A549 (cell line): ENCODE measurements at regions of chr19 and their contacts with region 1.

Region 1: GRCh38 chr19:48391107-48391986 is at the start of gene KDELR1:
- DNase-seq: peak; percentile 77 to 78
- ATAC-seq: peak; percentile 54 to 72
- H3K4me3 ChIP-seq: peak within 1 kb of the TSS; percentile 97
- H3K27ac ChIP-seq: peak within 1 kb of the TSS; percentile 95 to 97
- H3K4me1 ChIP-seq: peaks cover 54% of the 10 kb centered on the region
- CTCF ChIP-seq: peak; percentile 90
- EP300 ChIP-seq: no peak
- POLR2A ChIP-seq: peak; percentile 72
- RAD21 ChIP-seq: peak; percentile 31 to 47; a peak in 4 of 5 replicates
- polyA plus RNA-seq, gene KDELR1: 200 and 270 TPM in 2 replicates

Region 2: DNA sequence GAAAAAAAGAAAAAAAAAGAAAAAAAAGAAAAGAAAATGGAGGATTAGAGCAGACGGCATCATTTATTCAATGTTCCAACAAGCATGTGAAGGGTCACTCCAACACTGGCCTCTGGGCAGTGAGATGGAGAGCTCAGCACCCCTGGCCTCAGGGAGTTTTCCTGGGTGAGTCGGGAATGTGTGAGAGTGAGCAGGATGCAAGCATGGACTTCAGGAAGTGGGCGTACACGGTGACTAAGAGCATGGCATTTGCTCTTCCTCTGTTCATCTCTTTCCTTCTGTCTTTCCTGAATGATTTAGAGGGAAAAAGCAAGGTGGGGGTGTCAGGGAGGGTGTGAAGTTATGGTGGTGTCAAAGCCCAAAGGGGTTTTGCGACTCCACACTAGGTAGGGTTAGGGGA is 346.8 kb before region 1 on chr19:
- CTCF ChIA-PET with region 1: no interaction called
- POLR2A ChIA-PET with region 1: no interaction called
- DNase-seq: no peak
- ATAC-seq: no peak
- H3K4me3 ChIP-seq: no peak overlapping the region
- H3K27ac ChIP-seq: no peak overlapping the region
- H3K4me1 ChIP-seq: no peaks in the 10 kb centered on the region
- CTCF ChIP-seq: no peak
- EP300 ChIP-seq: no peak
- POLR2A ChIP-seq: no peak
- RAD21 ChIP-seq: no peak

Region 3: GRCh38 chr19:48321622-48322591 is 69.4 kb before region 1 on chr19:
- CTCF ChIA-PET with region 1: interaction called, 18 read pairs
- POLR2A ChIA-PET with region 1: interaction called, 10 read pairs
- DNase-seq: peak; percentile 94 to 99
- ATAC-seq: peak; percentile 67 to 74
- H3K4me3 ChIP-seq: peak overlapping the region; percentile 57
- H3K27ac ChIP-seq: peak overlapping the region; percentile 92 to 94
- H3K4me1 ChIP-seq: peaks cover 45% of the 10 kb centered on the region
- CTCF ChIP-seq: no peak
- EP300 ChIP-seq: no peak
- POLR2A ChIP-seq: peak; percentile 72
- RAD21 ChIP-seq: 0 out of 5 replicates have a peak, but pooled peaks of 1 of the 2 experiments have one; percentile 6

Region 4: GRCh38 chr19:48351341-48351752 is 40.0 kb before region 1 on chr19:
- CTCF ChIA-PET with region 1: interaction called, 33 read pairs
- POLR2A ChIA-PET with region 1: interaction called, 7 read pairs
- DNase-seq: peak; percentile 82 to 89
- ATAC-seq: peak; percentile 76 to 83
- H3K4me3 ChIP-seq: no peak overlapping the region
- H3K27ac ChIP-seq: peak overlapping the region in 1 of 2 experiments; percentile 74; a peak in 3 of 6 replicates
- H3K4me1 ChIP-seq: peaks cover 29% of the 10 kb centered on the region
- CTCF ChIP-seq: peak; percentile 90
- EP300 ChIP-seq: no peak
- POLR2A ChIP-seq: no peak
- RAD21 ChIP-seq: peak; percentile 73

Region 5: GRCh38 chr19:48372904-48373303 is 18.4 kb before region 1 on chr19:
- CTCF ChIA-PET with region 1: interaction called, 54 read pairs
- POLR2A ChIA-PET with region 1: interaction called, 10 read pairs
- DNase-seq: peak in 1 of 2 experiments; percentile 68
- ATAC-seq: peak; percentile 17 to 51; a peak in 3 of 6 replicates
- H3K4me3 ChIP-seq: no peak overlapping the region
- H3K27ac ChIP-seq: peak overlapping the region; percentile 64 to 81
- H3K4me1 ChIP-seq: peaks cover 23% of the 10 kb centered on the region
- CTCF ChIP-seq: no peak
- EP300 ChIP-seq: no peak
- POLR2A ChIP-seq: no peak
- RAD21 ChIP-seq: no peak

Region 6: DNA sequence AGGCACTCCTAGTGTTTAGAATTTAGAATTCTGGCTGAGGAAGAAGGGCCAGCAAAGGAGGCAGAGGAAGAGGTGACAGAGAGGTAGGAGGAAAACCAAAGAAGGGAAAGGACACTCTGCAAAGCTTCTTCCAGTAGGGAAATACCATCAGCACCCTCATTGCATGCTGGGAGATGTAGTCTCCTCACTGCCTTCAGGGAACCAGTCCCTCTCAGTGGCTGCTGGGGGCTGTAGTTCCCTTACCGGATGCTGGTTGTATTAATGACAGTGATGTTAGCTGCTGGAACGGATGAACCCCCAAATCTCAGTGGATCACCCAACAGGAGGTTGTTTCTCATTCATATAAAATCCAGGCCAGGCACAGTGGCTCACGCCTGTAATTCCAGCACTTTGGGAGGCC is 12.3 kb after region 1 on chr19:
- CTCF ChIA-PET with region 1: interaction called, 41 read pairs
- POLR2A ChIA-PET with region 1: interaction called, 8 read pairs
- DNase-seq: peak in 1 of 2 experiments; percentile 78
- ATAC-seq: peak; percentile 47 to 50; a peak in 5 of 6 replicates
- H3K4me3 ChIP-seq: no peak overlapping the region
- H3K27ac ChIP-seq: no peak overlapping the region
- H3K4me1 ChIP-seq: peaks cover 16% of the 10 kb centered on the region
- CTCF ChIP-seq: no peak
- EP300 ChIP-seq: no peak
- POLR2A ChIP-seq: no peak
- RAD21 ChIP-seq: no peak